Naive thymus-derived CD4-positive, alpha-beta T cell (primary cell): ENCODE measurements at regions of chr9 and their contacts with region 1.

Region 1: DNA sequence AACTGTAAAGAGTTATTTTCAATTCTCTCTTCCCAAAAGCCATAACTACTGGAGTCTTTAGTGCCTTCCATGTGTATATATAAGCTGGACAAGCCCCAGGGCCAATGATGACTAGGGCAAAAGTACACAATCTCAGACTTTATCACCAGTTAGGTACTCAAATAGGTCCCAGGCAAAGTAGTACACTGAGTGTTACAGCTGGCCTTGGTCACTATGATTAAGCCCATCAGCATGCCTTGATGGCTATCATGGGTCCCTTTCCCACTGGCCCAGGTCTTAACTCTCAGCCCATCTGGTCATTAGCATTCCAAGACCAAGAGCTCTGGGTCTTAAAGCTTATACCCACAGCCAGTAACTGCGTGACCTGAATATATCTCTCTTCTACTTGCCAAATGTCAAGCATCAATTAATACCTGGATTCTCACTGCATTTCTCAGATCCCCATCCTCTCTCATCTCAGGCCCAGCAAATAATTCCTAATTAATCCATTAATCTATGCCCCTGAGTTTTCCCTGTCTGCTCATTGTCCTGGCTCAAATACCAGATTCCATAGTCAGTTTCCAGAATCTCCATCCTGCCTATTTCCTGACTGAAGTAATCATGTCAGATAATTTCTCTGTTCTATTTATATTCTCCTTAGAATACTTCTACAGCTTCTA is 62.3 kb downstream of the NR6A1 start:
- DNase-seq: no peak
- ATAC-seq: no peak
- H3K4me3 ChIP-seq: no peak overlapping the region
- H3K4me3 Mint-ChIP-seq: no peak overlapping the region
- H3K27ac ChIP-seq: no peak overlapping the region
- H3K27ac Mint-ChIP-seq: no peak overlapping the region
- H3K4me1 ChIP-seq: no peaks in the 10 kb centered on the region
- H3K4me1 Mint-ChIP-seq: peaks cover 0 to 5% (median 0%) of the 10 kb centered on the region in 7 donors
- H3K27me3 ChIP-seq: no peaks in the 10 kb centered on the region
- H3K27me3 Mint-ChIP-seq: peaks cover 9 to 44% (median 16%) of the 10 kb centered on the region in 5 donors

Region 2: GRCh38 chr9:123608104-123608503 is 1100.7 kb before region 1 on chr9:
- CTCF ChIA-PET with region 1: no interaction called
- POLR2A ChIA-PET with region 1: no interaction called
- intact Hi-C with region 1: no loop called
- DNase-seq: no peak
- ATAC-seq: no peak
- H3K4me3 ChIP-seq: no peak overlapping the region
- H3K4me3 Mint-ChIP-seq: no peak overlapping the region
- H3K27ac ChIP-seq: no peak overlapping the region
- H3K27ac Mint-ChIP-seq: no peak overlapping the region
- H3K4me1 ChIP-seq: no peaks in the 10 kb centered on the region
- H3K4me1 Mint-ChIP-seq: no peaks in the 10 kb centered on the region
- H3K27me3 ChIP-seq: no peaks in the 10 kb centered on the region
- H3K27me3 Mint-ChIP-seq: no peaks in the 10 kb centered on the region

Region 3: GRCh38 chr9:124551472-124552272 is 157.1 kb before region 1 on chr9:
- CTCF ChIA-PET with region 1: interaction called, 11 read pairs
- POLR2A ChIA-PET with region 1: no interaction called
- intact Hi-C with region 1: loop called in 1 of 2 experiments (anchors 1 kb)
- DNase-seq: peak in 7 of 9 donors; percentile 18 to 38 (median 30)
- ATAC-seq: peak; percentile 45
- H3K4me3 ChIP-seq: no peak overlapping the region
- H3K4me3 Mint-ChIP-seq: no peak overlapping the region
- H3K27ac ChIP-seq: no peak overlapping the region
- H3K27ac Mint-ChIP-seq: no peak overlapping the region
- H3K4me1 ChIP-seq: peaks cover 0 to 10% of the 10 kb centered on the region in 2 donors
- H3K4me1 Mint-ChIP-seq: peaks cover 0 to 15% (median 9%) of the 10 kb centered on the region in 7 donors
- H3K27me3 ChIP-seq: no peaks in the 10 kb centered on the region
- H3K27me3 Mint-ChIP-seq: peaks cover 0 to 16% (median 0%) of the 10 kb centered on the region in 5 donors

Region 4: DNA sequence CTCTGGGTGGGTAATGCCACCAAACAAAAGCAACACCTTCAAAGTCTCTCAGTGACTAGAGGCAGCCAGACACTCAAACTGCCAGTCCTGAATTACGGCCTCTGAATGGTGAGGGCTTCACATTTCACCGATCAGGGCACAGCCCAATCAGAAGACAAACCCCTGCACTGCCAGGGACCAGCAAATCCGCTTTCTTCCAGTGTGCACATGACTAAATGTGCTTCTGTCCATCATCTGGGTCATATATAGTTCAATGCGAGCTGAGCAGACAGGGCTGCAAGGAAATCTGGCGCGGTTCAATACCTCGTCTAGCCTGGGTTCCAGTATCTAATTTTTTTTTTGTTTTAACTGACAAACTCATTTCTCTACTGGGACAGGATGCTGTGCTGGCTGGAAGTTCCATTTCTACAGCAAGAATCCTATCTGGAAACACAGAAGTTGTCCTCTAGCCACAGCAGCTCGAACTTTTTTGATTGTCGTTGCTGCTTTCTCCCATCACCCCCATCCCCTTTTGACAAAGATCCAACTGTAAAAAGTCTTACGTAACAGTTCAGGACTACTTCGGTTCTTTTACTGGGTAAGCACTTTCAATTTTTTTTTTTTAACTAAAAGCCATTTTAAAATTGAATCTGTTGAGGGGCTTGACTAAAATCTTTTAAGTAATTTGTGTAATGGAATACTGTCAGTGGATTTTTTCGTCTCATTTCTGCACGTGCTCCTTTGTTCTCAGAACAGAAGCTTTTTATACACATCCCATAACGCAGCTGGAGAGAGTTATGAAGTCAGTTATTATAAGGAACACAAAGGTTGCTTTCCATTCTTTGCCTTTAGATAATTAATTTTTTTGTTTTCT is 50.4 kb before region 1 on chr9:
- CTCF ChIA-PET with region 1: interaction called, 3 read pairs
- POLR2A ChIA-PET with region 1: no interaction called
- intact Hi-C with region 1: loop called in 1 of 2 experiments (anchors 1 kb)
- DNase-seq: peak in 7 of 9 donors; percentile 21 to 44 (median 34)
- ATAC-seq: peak; percentile 84
- H3K4me3 ChIP-seq: peak overlapping the region; percentile 71
- H3K4me3 Mint-ChIP-seq: peak overlapping the region; percentile 87 to 98 (median 94)
- H3K27ac ChIP-seq: peak overlapping the region; percentile 61
- H3K27ac Mint-ChIP-seq: peak overlapping the region in 8 of 9 donors; percentile 85 to 98 (median 89)
- H3K4me1 ChIP-seq: peaks cover 0 to 6% of the 10 kb centered on the region in 2 donors
- H3K4me1 Mint-ChIP-seq: peaks cover 23 to 61% (median 35%) of the 10 kb centered on the region in 7 donors
- H3K27me3 ChIP-seq: no peaks in the 10 kb centered on the region
- H3K27me3 Mint-ChIP-seq: peaks cover 0 to 18% (median 0%) of the 10 kb centered on the region in 5 donors

Region 5: GRCh38 chr9:124852829-124853531 is 144.2 kb after region 1 on chr9 and contains the start of gene WDR38:
- CTCF ChIA-PET with region 1: interaction called, 3 read pairs
- POLR2A ChIA-PET with region 1: no interaction called
- intact Hi-C with region 1: loop called in 1 of 2 experiments (anchors 2 kb)
- DNase-seq: peak; percentile 55 to 86 (median 76)
- ATAC-seq: peak; percentile 95
- H3K4me3 ChIP-seq: peak within 1 kb of the TSS; percentile 50
- H3K4me3 Mint-ChIP-seq: peak within 1 kb of the TSS in 9 of 10 donors; percentile 64 to 79 (median 68)
- H3K27ac ChIP-seq: peak within 1 kb of the TSS; percentile 46
- H3K27ac Mint-ChIP-seq: peak within 1 kb of the TSS in 3 of 9 donors; percentile 9 to 23 (median 19)
- H3K4me1 ChIP-seq: peaks cover 8% of the 10 kb centered on the region in 2 donors
- H3K4me1 Mint-ChIP-seq: peaks cover 4 to 14% (median 6%) of the 10 kb centered on the region in 7 donors
- H3K27me3 ChIP-seq: no peaks in the 10 kb centered on the region
- H3K27me3 Mint-ChIP-seq: peaks cover 5 to 16% (median 9%) of the 10 kb centered on the region in 5 donors
- total RNA-seq, gene WDR38: not detected